ENCODE measurements at regions of chr9 and their contacts with region 1.

Region 1: GRCh38 chr9:81689343-81690190 is at the start of gene TLE1:
- DNase-seq: peak; percentile 99 to 100 (median 99)
- H3K4me3 ChIP-seq: peak within 1 kb of the TSS; percentile 91
- H3K27ac ChIP-seq: peak within 1 kb of the TSS; percentile 16 to 83
- H3K4me1 ChIP-seq: no peaks in the 10 kb centered on the region
- H3K27me3 ChIP-seq: no peaks in the 10 kb centered on the region
- CTCF ChIP-seq: peak in 1 of 3 donors; percentile 16
- EP300 ChIP-seq: peak; percentile 88
- POLR2A ChIP-seq: peak; percentile 75
- total RNA-seq, gene TLE1: 25.8 to 58.1 (median 43.8) TPM

Region 2: DNA sequence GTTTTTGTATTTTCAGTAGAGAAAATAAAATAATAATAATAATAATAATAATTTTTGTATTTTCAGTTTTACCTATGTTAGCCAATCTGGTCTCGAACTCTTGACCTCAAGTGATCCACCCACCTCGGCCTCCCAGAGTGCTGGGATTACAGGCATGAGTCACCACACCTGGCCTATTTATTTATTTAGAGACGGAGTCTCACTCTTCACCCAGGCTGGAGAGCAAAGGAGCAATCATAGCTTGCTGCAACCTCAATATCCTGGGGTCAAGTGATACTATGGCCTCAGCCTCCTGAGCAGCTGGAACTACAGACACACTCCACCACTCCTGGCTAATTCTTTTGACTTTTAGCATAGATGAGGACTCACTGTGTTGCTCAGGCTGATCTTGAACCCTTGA is 167.7 kb before region 1 on chr9:
- intact Hi-C with region 1: loop called in 2 of 4 experiments (anchors 5 kb)
- DNase-seq: no peak
- H3K4me3 ChIP-seq: no peak overlapping the region
- H3K27ac ChIP-seq: no peak overlapping the region
- H3K4me1 ChIP-seq: no peaks in the 10 kb centered on the region
- H3K27me3 ChIP-seq: no peaks in the 10 kb centered on the region
- CTCF ChIP-seq: no peak
- EP300 ChIP-seq: no peak
- POLR2A ChIP-seq: no peak

Region 3: GRCh38 chr9:81609782-81610739 is 79.5 kb before region 1 on chr9:
- intact Hi-C with region 1: loop called in 2 of 4 experiments (anchors 10 kb)
- DNase-seq: no peak
- H3K4me3 ChIP-seq: no peak overlapping the region
- H3K27ac ChIP-seq: no peak overlapping the region
- H3K4me1 ChIP-seq: no peaks in the 10 kb centered on the region
- H3K27me3 ChIP-seq: no peaks in the 10 kb centered on the region
- CTCF ChIP-seq: no peak
- EP300 ChIP-seq: no peak
- POLR2A ChIP-seq: no peak

Region 4: GRCh38 chr9:81759668-81760215 is 70.2 kb after region 1 on chr9:
- intact Hi-C with region 1: no loop called
- DNase-seq: no peak
- H3K4me3 ChIP-seq: no peak overlapping the region
- H3K27ac ChIP-seq: no peak overlapping the region
- H3K4me1 ChIP-seq: no peaks in the 10 kb centered on the region
- H3K27me3 ChIP-seq: no peaks in the 10 kb centered on the region
- CTCF ChIP-seq: no peak
- EP300 ChIP-seq: no peak
- POLR2A ChIP-seq: no peak

Region 5: GRCh38 chr9:81848472-81848871 is 158.9 kb after region 1 on chr9:
- intact Hi-C with region 1: loop called in 2 of 4 experiments (anchors 5 to 10 kb)
- DNase-seq: no peak
- H3K4me3 ChIP-seq: no peak overlapping the region
- H3K27ac ChIP-seq: no peak overlapping the region
- H3K4me1 ChIP-seq: no peaks in the 10 kb centered on the region
- H3K27me3 ChIP-seq: no peaks in the 10 kb centered on the region
- CTCF ChIP-seq: peak in 2 of 3 donors; percentile 30 to 35
- EP300 ChIP-seq: no peak
- POLR2A ChIP-seq: no peak